Activated T-helper 1 cell treated with anti-CD3 and anti-CD28 coated beads, Interleukin-12 subunit alpha, Interleukin-12 subunit beta, Interleukin-2, Interleukin-4 antibody, amounts not matched to agents 30 ng/mL and 10 ng/mL and 1 ng/mL, durations not matched to agents 14 hours and 24 hours and 36 hours (primary cell): ENCODE measurements at regions of chr5 and their contacts with region 1.

Region 1: GRCh38 chr5:56270568-56271392 is 37.6 kb upstream of the ANKRD55 start:
- DNase-seq: peak; percentile 65
- H3K4me3 Mint-ChIP-seq: peak overlapping the region; percentile 48
- H3K27ac Mint-ChIP-seq: peak overlapping the region; percentile 46
- H3K4me1 Mint-ChIP-seq: peaks cover 21% of the 10 kb centered on the region
- H3K27me3 Mint-ChIP-seq: no peaks in the 10 kb centered on the region

Region 2: GRCh38 chr5:55714339-55714738 is 556.4 kb before region 1 on chr5:
- intact Hi-C with region 1: no loop called
- DNase-seq: no peak
- H3K4me3 Mint-ChIP-seq: no peak overlapping the region
- H3K27ac Mint-ChIP-seq: no peak overlapping the region
- H3K4me1 Mint-ChIP-seq: peaks cover 19% of the 10 kb centered on the region
- H3K27me3 Mint-ChIP-seq: no peaks in the 10 kb centered on the region

Region 3: DNA sequence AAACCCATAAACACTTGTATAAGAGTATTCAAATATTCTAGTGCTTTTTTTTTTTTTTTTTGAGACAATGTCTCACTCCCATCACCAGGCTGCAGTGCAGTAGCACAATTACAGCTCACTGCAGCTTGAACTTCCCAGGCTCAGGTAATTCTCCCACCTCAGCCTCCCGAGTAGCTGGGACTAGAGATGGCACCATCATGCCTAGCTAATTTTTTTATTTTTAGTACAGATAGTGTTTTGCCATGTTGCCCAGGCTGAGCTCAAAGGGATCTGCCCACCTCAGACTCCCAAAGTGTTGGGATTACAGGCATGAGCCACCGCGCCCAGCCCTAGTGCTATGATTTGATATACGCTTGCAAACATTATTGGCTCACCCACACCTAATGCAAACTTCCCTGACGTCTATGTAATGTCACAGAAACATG is 287.8 kb before region 1 on chr5:
- intact Hi-C with region 1: loop called (anchors 1 kb)
- DNase-seq: no peak
- H3K4me3 Mint-ChIP-seq: peak overlapping the region; percentile 56
- H3K27ac Mint-ChIP-seq: peak overlapping the region; percentile 51
- H3K4me1 Mint-ChIP-seq: peaks cover 81% of the 10 kb centered on the region
- H3K27me3 Mint-ChIP-seq: no peaks in the 10 kb centered on the region

Region 4: DNA sequence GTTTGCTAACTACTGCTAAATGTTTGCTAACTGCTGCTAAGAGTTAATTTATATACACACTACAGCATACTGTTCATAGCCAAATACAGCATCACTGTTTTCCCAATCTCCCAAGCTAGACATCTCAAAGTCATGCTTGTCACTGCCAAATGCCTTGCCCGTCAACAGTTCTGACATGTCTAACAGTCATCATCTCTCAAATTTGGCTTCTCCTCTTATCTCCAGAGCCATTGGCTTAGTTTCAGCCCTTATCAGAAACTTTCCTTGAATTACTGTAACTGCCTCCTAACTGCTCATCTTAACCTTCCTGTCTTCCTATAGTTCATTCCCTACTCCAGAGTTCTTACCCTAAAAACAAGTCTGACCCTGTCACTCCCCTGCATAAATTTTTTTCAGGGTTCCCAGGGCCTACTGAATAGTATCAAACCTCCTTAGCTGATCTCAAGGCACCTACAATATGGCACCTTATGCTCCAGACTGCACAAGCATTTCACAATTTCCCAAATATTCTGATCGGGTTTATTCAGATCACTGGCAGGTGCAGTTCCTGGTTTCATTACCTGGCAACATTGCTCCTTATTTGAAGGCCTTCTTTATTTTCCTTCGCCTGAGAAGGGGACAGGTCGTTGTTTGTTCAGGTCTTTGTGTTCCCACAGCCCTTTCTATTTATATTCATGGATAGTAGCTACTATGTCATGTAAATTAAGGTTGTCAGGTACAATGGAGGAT is 18.3 kb after region 1 on chr5:
- intact Hi-C with region 1: no loop called
- DNase-seq: no peak
- H3K4me3 Mint-ChIP-seq: no peak overlapping the region
- H3K27ac Mint-ChIP-seq: no peak overlapping the region
- H3K4me1 Mint-ChIP-seq: peaks cover 4% of the 10 kb centered on the region
- H3K27me3 Mint-ChIP-seq: no peaks in the 10 kb centered on the region

Region 5: GRCh38 chr5:56481428-56482357 is 210.9 kb after region 1 on chr5:
- intact Hi-C with region 1: loop called (anchors 2 kb)
- DNase-seq: peak; percentile 5
- H3K4me3 Mint-ChIP-seq: peak overlapping the region; percentile 83
- H3K27ac Mint-ChIP-seq: peak overlapping the region; percentile 77
- H3K4me1 Mint-ChIP-seq: peaks cover 32% of the 10 kb centered on the region
- H3K27me3 Mint-ChIP-seq: no peaks in the 10 kb centered on the region

Region 6: GRCh38 chr5:56814963-56815658 is 544.3 kb after region 1 on chr5 and contains the start of gene MAP3K1:
- intact Hi-C with region 1: loop called (anchors 1 kb)
- DNase-seq: peak; percentile 72
- H3K4me3 Mint-ChIP-seq: peak within 1 kb of the TSS; percentile 91
- H3K27ac Mint-ChIP-seq: peak within 1 kb of the TSS; percentile 82
- H3K4me1 Mint-ChIP-seq: peaks cover 48% of the 10 kb centered on the region
- H3K27me3 Mint-ChIP-seq: peaks cover 2% of the 10 kb centered on the region
- total RNA-seq, gene MAP3K1: 23.6 and 25.3 TPM in 2 replicates

Region 7: GRCh38 chr5:57137401-57137800 is 866.6 kb after region 1 on chr5:
- intact Hi-C with region 1: loop called (anchors 5 kb)
- DNase-seq: no peak
- H3K4me3 Mint-ChIP-seq: no peak overlapping the region
- H3K27ac Mint-ChIP-seq: no peak overlapping the region
- H3K4me1 Mint-ChIP-seq: no peaks in the 10 kb centered on the region
- H3K27me3 Mint-ChIP-seq: peaks cover 21% of the 10 kb centered on the region